ENCODE measurements at regions of chr2 and their contacts with region 1.

Region 1: GRCh38 chr2:221573430-221574230 is 1.5 kb upstream of the EPHA4 start:
- DNase-seq: peak; percentile 69
- H3K4me3 ChIP-seq: peak overlapping the region; percentile 67 to 78 (median 71)
- H3K27ac ChIP-seq: no peak overlapping the region
- H3K4me1 ChIP-seq: peaks cover 19% of the 10 kb centered on the region
- H3K27me3 ChIP-seq: peaks cover 2% of the 10 kb centered on the region
- CTCF ChIP-seq: peak; percentile 65 to 95

Region 2: GRCh38 chr2:219736209-219736608 is 1837.4 kb before region 1 on chr2:
- CTCF ChIA-PET with region 1: no interaction called
- dilution Hi-C with region 1: no loop called
- in situ Hi-C with region 1: loop called in 1 of 2 experiments (anchors 25 kb)
- intact Hi-C with region 1: loop called (anchors 1 kb)
- DNase-seq: peak; percentile 67
- H3K4me3 ChIP-seq: no peak overlapping the region
- H3K27ac ChIP-seq: no peak overlapping the region
- H3K4me1 ChIP-seq: peaks cover 12% of the 10 kb centered on the region
- H3K27me3 ChIP-seq: no peaks in the 10 kb centered on the region
- CTCF ChIP-seq: peak; percentile 47 to 62

Region 3: GRCh38 chr2:220076738-220077137 is 1496.9 kb before region 1 on chr2:
- CTCF ChIA-PET with region 1: no interaction called
- dilution Hi-C with region 1: no loop called
- in situ Hi-C with region 1: no loop called
- intact Hi-C with region 1: loop called (anchors 1 kb)
- DNase-seq: peak; percentile 79
- H3K4me3 ChIP-seq: no peak overlapping the region
- H3K27ac ChIP-seq: no peak overlapping the region
- H3K4me1 ChIP-seq: peaks cover 6% of the 10 kb centered on the region
- H3K27me3 ChIP-seq: no peaks in the 10 kb centered on the region
- CTCF ChIP-seq: peak; percentile 26 to 65

Region 4: GRCh38 chr2:220695397-220696279 is 878.0 kb before region 1 on chr2:
- CTCF ChIA-PET with region 1: no interaction called
- dilution Hi-C with region 1: no loop called
- in situ Hi-C with region 1: loop called in 1 of 2 experiments (anchors 10 kb)
- intact Hi-C with region 1: no loop called
- DNase-seq: no peak
- H3K4me3 ChIP-seq: no peak overlapping the region
- H3K27ac ChIP-seq: no peak overlapping the region
- H3K4me1 ChIP-seq: no peaks in the 10 kb centered on the region
- H3K27me3 ChIP-seq: no peaks in the 10 kb centered on the region
- CTCF ChIP-seq: no peak

Region 5: GRCh38 chr2:221228214-221228769 is 345.3 kb before region 1 on chr2:
- CTCF ChIA-PET with region 1: no interaction called
- dilution Hi-C with region 1: no loop called
- in situ Hi-C with region 1: no loop called
- intact Hi-C with region 1: loop called (anchors 5 kb)
- DNase-seq: no peak
- H3K4me3 ChIP-seq: no peak overlapping the region
- H3K27ac ChIP-seq: no peak overlapping the region
- H3K4me1 ChIP-seq: no peaks in the 10 kb centered on the region
- H3K27me3 ChIP-seq: no peaks in the 10 kb centered on the region
- CTCF ChIP-seq: no peak

Region 6: DNA sequence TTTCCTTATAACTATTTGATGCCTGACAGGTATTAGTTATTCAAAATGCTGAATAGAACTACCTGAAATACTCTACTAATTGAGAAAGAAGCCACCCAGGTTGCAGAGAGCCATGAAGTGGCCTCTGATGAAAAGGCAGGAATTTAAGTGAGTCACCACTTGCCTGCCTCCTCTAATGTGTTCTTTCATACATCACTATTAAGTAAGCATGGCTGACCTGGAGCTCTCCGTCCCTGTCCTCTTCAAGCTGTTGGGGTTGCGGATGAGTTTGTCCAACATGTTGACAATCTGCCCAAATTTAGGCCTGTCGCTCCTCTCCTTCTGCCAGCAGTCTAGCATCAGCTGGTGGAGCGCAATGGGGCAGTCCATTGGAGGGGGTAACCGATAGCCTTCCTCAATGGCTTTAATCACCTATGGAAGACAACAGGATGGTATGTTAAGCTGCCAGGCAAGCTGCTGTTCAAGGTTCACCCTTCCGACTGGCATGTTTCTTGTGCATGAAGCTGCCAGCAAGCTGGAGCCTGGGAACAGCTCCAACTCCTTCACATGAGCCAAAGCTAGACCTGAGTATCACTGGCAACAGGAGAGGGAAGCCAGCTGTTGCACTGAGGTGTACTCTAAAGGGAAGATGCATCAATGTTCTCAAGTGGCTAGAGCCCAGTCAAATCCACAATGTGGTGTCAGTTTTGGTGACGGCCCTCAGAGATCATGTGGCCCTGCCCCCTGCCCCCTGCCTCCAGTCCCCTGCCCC is 143.7 kb before region 1 on chr2:
- CTCF ChIA-PET with region 1: no interaction called
- dilution Hi-C with region 1: no loop called
- in situ Hi-C with region 1: no loop called
- intact Hi-C with region 1: loop called (anchors 10 kb)
- DNase-seq: peak; percentile 42
- H3K4me3 ChIP-seq: no peak overlapping the region
- H3K27ac ChIP-seq: no peak overlapping the region
- H3K4me1 ChIP-seq: peaks cover 11% of the 10 kb centered on the region
- H3K27me3 ChIP-seq: no peaks in the 10 kb centered on the region
- CTCF ChIP-seq: no peak

Region 7: DNA sequence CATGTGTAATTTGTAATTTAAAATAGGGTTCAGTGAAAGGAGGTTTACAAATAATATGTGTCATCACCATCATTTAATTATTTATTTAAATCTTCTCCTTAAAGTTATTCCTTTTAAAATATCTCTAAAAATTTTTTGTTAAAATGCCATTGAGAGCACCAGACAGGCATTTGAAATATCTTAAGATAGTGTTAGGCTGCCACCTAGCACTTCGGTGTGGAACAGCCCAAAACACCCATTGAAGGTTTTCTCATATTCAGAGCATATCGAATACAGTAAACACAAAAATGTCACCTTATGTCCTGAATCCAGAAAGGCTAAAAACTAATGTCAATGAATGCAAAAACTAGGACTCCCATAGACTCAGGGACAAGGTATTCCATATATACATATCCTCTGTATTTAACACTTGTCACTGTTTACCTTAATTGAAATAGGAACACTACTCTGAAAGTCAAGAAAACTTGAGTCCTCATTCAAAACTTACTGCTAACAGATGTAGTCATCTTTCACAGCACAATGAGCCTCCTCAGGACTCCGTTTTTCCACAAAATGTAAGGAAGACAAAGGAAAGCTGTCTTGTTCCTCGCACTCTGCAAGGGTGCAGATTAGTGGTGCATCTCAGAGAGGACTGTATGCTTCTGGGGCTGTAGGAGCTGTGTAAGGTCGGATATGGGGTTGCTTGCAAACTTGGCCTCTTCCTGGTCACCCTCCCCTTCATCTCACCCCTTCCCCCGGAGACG is 395.6 kb after region 1 on chr2:
- CTCF ChIA-PET with region 1: no interaction called
- dilution Hi-C with region 1: no loop called
- in situ Hi-C with region 1: loop called in 1 of 2 experiments (anchors 25 kb)
- intact Hi-C with region 1: loop called (anchors 2 kb)
- DNase-seq: peak; percentile 23
- H3K4me3 ChIP-seq: no peak overlapping the region
- H3K27ac ChIP-seq: no peak overlapping the region
- H3K4me1 ChIP-seq: no peaks in the 10 kb centered on the region
- H3K27me3 ChIP-seq: no peaks in the 10 kb centered on the region
- CTCF ChIP-seq: peak; percentile 73 to 75

Measured in mammary epithelial cell (primary cell).